Activated CD4-positive, alpha-beta T cell treated with anti-CD3 and anti-CD28 coated beads for 36 hours (primary cell): ENCODE measurements at regions of chr10 and their contacts with region 1.

Region 1: GRCh38 chr10:9091530-9092093 is 1037.1 kb downstream of the GATA3 start:
- DNase-seq: peak; percentile 57
- ATAC-seq: peak; percentile 97
- H3K4me3 Mint-ChIP-seq: peak overlapping the region; percentile 27
- H3K27ac Mint-ChIP-seq: peak overlapping the region; percentile 52
- H3K4me1 Mint-ChIP-seq: peaks cover 51% of the 10 kb centered on the region
- H3K27me3 Mint-ChIP-seq: peaks cover 3% of the 10 kb centered on the region

Region 2: GRCh38 chr10:8138471-8138870 is 953.1 kb before region 1 on chr10:
- CTCF ChIA-PET with region 1: no interaction called
- POLR2A ChIA-PET with region 1: no interaction called
- intact Hi-C with region 1: loop called (anchors 5 kb)
- DNase-seq: no peak
- ATAC-seq: no peak
- H3K4me3 Mint-ChIP-seq: no peak overlapping the region
- H3K27ac Mint-ChIP-seq: peak overlapping the region; percentile 60
- H3K4me1 Mint-ChIP-seq: peaks cover 36% of the 10 kb centered on the region
- H3K27me3 Mint-ChIP-seq: peaks cover 2% of the 10 kb centered on the region

Region 3: DNA sequence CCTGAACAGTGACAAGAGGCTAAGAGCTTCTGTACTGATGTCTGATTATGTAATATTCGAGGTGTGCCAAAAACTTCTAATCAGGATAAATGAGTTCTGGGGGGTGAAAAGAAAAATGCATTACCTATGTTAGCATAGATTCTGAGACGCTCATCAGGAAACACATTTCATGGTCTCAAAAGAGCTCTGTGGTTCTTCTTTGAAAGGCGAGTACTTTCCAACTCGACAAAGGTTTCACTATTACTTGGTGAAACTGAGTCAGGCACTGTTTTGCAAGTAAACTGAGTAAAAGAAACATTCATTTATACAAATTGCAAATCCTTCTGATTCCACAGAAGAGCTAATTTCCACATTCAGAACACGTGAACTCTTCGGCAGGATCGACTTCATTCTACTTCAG is 513.9 kb before region 1 on chr10:
- CTCF ChIA-PET with region 1: no interaction called
- POLR2A ChIA-PET with region 1: no interaction called
- intact Hi-C with region 1: loop called (anchors 5 to 10 kb)
- DNase-seq: peak; percentile 12
- ATAC-seq: peak; percentile 71
- H3K4me3 Mint-ChIP-seq: no peak overlapping the region
- H3K27ac Mint-ChIP-seq: peak overlapping the region; percentile 59
- H3K4me1 Mint-ChIP-seq: peaks cover 36% of the 10 kb centered on the region
- H3K27me3 Mint-ChIP-seq: peaks cover 31% of the 10 kb centered on the region

Region 4: DNA sequence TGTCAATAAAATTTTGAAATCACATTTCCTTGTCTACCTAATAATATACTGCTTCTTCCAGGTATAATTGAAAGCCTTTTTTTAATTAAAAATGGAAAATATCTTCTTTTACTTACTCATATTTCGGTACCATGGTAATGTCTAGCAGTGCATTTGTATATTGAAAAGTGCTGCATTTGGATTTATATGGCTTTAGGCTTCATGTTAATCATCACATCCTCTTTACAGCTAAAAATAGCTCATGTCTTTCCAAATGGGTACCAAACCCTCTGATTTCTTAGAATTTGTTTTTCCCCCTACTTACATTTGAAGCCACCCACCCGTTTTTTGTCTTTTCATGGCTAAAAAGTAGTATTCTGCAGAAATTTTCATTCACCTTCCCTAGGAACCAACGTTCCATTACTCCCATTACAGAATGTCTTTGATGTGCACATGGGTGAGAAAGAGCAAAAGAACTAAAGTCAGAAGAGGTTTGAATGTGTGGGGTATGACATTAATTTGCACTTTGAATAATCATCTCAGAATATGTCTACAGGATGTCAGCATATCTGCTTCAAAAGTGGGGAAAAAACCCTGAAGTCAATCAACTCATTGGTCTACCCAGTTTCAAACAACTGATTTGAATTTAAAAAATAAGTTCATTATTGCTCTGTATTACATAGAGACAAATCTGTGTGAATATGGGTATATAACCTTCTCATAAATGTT is 101.2 kb before region 1 on chr10:
- CTCF ChIA-PET with region 1: no interaction called
- POLR2A ChIA-PET with region 1: no interaction called
- intact Hi-C with region 1: loop called in 1 of 2 experiments (anchors 1 kb)
- DNase-seq: no peak
- ATAC-seq: peak; percentile 82
- H3K4me3 Mint-ChIP-seq: peak overlapping the region; percentile 5
- H3K27ac Mint-ChIP-seq: peak overlapping the region; percentile 62
- H3K4me1 Mint-ChIP-seq: peaks cover 63% of the 10 kb centered on the region
- H3K27me3 Mint-ChIP-seq: peaks cover 5% of the 10 kb centered on the region

Region 5: DNA sequence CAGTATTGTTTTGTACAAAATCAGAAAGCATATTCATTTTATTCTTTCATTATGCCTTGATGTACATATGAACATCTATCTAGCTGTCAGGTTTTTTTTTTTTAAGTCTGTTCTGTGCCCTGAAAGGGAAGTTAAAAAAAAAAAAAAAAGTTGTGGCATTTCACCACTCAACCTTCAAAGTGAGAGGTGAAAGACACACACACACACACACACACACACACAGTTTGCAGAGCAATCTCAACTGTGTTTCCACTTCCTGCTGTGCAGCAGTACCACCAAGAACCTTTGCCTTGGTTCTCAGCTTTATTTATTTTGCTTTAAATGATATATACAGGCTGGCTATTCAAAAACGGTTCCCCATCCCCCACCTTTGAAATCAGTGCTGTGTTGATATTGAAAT is 81.5 kb before region 1 on chr10:
- CTCF ChIA-PET with region 1: interaction called, 3 read pairs
- POLR2A ChIA-PET with region 1: no interaction called
- intact Hi-C with region 1: loop called in 1 of 2 experiments (anchors 1 kb)
- DNase-seq: peak; percentile 42
- ATAC-seq: peak; percentile 80
- H3K4me3 Mint-ChIP-seq: peak overlapping the region; percentile 30
- H3K27ac Mint-ChIP-seq: peak overlapping the region; percentile 78
- H3K4me1 Mint-ChIP-seq: peaks cover 64% of the 10 kb centered on the region
- H3K27me3 Mint-ChIP-seq: peaks cover 2% of the 10 kb centered on the region

Region 6: DNA sequence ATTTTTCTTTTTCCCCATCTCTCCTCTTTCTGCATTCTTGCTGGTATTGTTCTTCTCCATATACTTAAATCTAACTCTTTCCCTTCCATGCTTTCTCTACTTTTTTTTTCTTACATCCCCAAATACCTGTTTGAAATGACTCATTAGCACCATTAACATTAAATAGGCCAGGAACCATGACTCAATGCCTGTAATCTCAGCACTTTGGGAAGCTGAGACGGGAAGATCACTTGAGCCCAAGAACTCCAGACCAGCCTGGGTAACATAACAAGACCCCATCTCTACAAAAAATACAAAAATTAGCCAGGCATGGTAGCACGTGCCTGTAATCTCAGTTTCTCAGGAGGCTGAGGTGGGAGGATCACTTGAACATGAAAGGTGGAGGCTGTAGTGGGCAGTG is 10.4 kb before region 1 on chr10:
- CTCF ChIA-PET with region 1: interaction called, 7 read pairs
- POLR2A ChIA-PET with region 1: interaction called, 3 read pairs
- intact Hi-C with region 1: loop called (anchors 1 kb)
- DNase-seq: no peak
- ATAC-seq: no peak
- H3K4me3 Mint-ChIP-seq: no peak overlapping the region
- H3K27ac Mint-ChIP-seq: no peak overlapping the region
- H3K4me1 Mint-ChIP-seq: peaks cover 29% of the 10 kb centered on the region
- H3K27me3 Mint-ChIP-seq: peaks cover 16% of the 10 kb centered on the region

Region 7: DNA sequence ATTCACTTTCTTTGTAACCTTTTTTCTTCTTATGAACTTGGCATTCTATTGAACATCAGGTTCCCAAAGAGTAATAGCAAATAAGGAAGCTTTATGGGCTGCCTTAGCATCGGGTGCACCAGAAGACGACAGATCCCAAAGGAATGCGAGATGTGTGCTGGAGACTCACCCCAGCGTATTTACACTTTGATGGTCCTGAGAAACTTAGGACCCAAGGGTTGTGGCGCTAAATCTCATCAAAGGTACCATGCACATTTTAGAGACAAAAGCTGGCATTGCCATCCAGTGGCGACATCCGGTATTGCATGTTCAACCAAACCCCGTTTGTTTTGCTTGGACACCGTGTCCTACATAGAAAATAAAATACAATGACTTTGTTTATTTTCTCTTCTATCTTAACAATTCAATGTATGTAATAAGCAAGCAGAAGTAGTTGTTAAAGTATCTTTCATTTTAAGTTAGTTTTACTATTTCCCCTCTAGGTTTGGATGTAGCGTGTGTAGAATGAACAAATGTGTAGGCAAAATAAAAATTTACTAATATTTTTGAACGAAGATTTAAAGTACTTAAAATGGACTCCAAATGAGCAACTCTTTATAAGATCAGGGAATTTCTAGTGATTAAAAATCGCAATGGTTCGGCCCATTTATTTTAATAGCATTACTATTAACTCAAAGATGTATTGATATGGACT is 117.6 kb after region 1 on chr10:
- CTCF ChIA-PET with region 1: no interaction called
- POLR2A ChIA-PET with region 1: no interaction called
- intact Hi-C with region 1: loop called in 1 of 2 experiments (anchors 5 kb)
- DNase-seq: peak; percentile 85
- ATAC-seq: peak; percentile 53
- H3K4me3 Mint-ChIP-seq: no peak overlapping the region
- H3K27ac Mint-ChIP-seq: no peak overlapping the region
- H3K4me1 Mint-ChIP-seq: peaks cover 9% of the 10 kb centered on the region
- H3K27me3 Mint-ChIP-seq: peaks cover 5% of the 10 kb centered on the region